Activated CD8-positive, alpha-beta T cell treated with anti-CD3 and anti-CD28 coated beads for 36 hours (primary cell): ENCODE measurements at regions of chr5 and their contacts with region 1.

Region 1: DNA sequence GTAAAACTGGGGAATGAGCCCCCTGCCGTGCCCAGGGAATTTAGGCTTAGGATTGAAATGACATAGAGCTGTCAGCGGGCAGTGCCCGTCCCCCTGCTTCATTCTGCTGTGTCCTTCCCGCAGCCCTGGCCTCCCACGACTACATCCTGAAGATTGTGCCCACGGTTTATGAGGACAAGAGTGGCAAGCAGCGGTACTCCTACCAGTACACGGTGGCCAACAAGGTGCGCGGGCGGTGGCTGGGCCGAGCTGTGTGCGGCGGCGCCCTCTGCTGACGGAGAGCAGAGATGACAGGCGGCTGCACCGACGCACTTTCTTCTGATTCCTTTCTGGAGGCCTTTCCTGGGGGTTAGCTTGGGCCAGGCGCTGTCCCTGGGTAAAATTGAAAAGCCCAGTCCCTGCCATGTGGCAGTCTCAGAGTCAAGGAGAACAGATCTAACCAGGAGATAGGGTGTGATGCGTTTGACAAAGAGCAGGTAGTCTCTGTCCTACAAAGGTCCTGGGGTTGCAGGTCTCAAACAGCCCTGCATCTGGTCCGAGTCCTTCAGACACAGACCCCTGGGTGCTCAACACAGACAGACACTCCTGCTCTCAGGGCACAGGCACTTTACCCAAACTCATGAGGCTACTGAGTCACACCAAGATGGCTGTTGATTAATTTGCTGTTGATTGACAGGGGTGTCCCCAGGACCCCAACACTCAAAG is 26.8 kb upstream of the RPL26L1 start:
- DNase-seq: peak; percentile 83
- ATAC-seq: peak; percentile 98
- H3K4me3 Mint-ChIP-seq: no peak overlapping the region
- H3K27ac Mint-ChIP-seq: no peak overlapping the region
- H3K4me1 Mint-ChIP-seq: peaks cover 2% of the 10 kb centered on the region
- H3K27me3 Mint-ChIP-seq: no peaks in the 10 kb centered on the region
- CTCF ChIP-seq: peak; percentile 96

Region 2: GRCh38 chr5:172583931-172584511 is 348.4 kb before region 1 on chr5:
- CTCF ChIA-PET with region 1: no interaction called
- POLR2A ChIA-PET with region 1: no interaction called
- intact Hi-C with region 1: no loop called
- DNase-seq: no peak
- ATAC-seq: no peak
- H3K4me3 Mint-ChIP-seq: no peak overlapping the region
- H3K27ac Mint-ChIP-seq: no peak overlapping the region
- H3K4me1 Mint-ChIP-seq: no peaks in the 10 kb centered on the region
- H3K27me3 Mint-ChIP-seq: no peaks in the 10 kb centered on the region
- CTCF ChIP-seq: no peak

Region 3: GRCh38 chr5:172707285-172708182 is 224.9 kb before region 1 on chr5:
- CTCF ChIA-PET with region 1: interaction called, 279 read pairs
- POLR2A ChIA-PET with region 1: no interaction called
- intact Hi-C with region 1: no loop called
- DNase-seq: peak; percentile 24
- ATAC-seq: peak; percentile 30
- H3K4me3 Mint-ChIP-seq: no peak overlapping the region
- H3K27ac Mint-ChIP-seq: no peak overlapping the region
- H3K4me1 Mint-ChIP-seq: no peaks in the 10 kb centered on the region
- H3K27me3 Mint-ChIP-seq: peaks cover 10% of the 10 kb centered on the region
- CTCF ChIP-seq: no peak

Region 4: DNA sequence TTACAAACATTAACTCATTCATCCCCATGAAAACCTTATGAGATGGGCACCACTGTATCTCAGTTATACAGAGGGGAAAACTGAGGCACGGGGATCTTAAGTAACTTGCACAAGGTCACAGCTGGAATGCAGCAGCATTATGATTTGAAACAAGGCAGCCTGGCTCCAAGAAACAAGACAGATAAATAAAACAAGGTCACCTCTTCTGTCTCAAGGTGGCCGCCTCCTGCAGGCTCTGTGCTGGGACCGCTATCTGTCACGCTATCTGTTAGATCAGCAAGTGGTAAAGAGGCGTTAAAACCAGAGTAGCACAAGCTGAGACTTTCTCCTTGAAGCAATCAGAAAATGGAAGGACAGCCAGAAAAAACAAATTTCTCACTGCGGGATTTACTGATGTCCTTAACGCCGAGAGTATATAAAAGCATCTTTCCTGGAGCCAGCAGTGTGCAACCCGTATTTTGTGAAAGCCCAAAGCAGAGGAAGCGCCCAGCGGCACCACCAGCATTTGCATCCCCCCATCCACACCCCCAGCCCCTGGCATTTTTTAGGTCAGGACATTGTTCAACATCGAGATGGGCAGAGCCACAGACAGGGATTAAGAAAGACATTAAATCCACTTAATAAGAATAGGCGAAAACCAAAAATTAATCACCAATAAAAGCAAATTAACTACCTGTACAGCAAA is 210.2 kb before region 1 on chr5:
- CTCF ChIA-PET with region 1: interaction called, 105 read pairs
- POLR2A ChIA-PET with region 1: interaction called, 8 read pairs
- intact Hi-C with region 1: loop called (anchors 1 kb)
- DNase-seq: peak; percentile 36
- ATAC-seq: peak; percentile 68
- H3K4me3 Mint-ChIP-seq: no peak overlapping the region
- H3K27ac Mint-ChIP-seq: no peak overlapping the region
- H3K4me1 Mint-ChIP-seq: peaks cover 12% of the 10 kb centered on the region
- H3K27me3 Mint-ChIP-seq: no peaks in the 10 kb centered on the region
- CTCF ChIP-seq: no peak

Region 5: DNA sequence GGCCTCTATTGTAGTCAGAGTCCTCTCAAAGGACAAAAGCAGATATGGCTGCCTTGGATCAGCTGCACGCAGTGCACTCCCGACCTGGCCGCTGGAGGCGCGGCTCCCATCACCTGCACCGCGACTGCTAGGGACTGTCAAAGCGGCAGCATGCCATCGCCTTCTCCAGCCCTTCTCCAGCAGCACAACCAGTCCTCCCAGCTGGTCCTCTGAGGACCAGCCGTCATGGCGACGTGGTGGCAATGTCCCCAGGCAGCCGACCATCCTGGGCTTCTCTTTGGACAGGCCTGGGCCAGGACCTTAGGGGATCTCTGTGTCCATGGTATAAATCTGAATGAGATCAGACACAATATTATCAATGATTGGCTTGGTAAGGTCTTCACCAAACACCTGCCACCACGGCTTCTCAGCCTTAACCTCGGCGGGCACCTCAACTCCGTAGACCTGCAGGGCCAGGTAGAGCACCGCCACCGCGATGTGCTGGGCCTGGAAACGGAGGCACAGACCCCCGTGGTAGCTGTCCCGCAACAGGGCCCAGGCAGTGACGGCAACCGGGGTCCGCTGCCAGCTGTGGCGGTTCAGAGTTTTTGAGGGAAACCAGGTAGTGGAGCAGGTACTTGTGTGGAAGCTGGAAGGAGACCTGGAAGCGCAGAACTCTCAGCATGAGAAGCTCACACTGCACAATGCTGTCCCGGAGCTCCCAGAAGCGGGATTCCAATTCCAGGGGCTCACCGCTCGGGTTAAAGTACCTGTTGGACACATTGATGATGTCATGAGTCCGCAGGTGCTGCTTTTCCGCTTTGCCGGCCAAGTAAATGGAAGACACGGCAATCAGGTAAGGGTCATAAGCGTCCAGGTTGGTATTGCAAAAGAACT is 170.0 kb before region 1 on chr5:
- CTCF ChIA-PET with region 1: interaction called, 11 read pairs
- POLR2A ChIA-PET with region 1: no interaction called
- intact Hi-C with region 1: no loop called
- DNase-seq: no peak
- ATAC-seq: no peak
- H3K4me3 Mint-ChIP-seq: no peak overlapping the region
- H3K27ac Mint-ChIP-seq: no peak overlapping the region
- H3K4me1 Mint-ChIP-seq: peaks cover 23% of the 10 kb centered on the region
- H3K27me3 Mint-ChIP-seq: no peaks in the 10 kb centered on the region
- CTCF ChIP-seq: no peak

Region 6: GRCh38 chr5:172777881-172778814 is 154.3 kb before region 1 on chr5:
- CTCF ChIA-PET with region 1: interaction called, 17 read pairs
- POLR2A ChIA-PET with region 1: no interaction called
- intact Hi-C with region 1: no loop called
- DNase-seq: peak; percentile 36
- ATAC-seq: peak; percentile 38
- H3K4me3 Mint-ChIP-seq: peak overlapping the region; percentile 51
- H3K27ac Mint-ChIP-seq: peak overlapping the region; percentile 89
- H3K4me1 Mint-ChIP-seq: peaks cover 51% of the 10 kb centered on the region
- H3K27me3 Mint-ChIP-seq: no peaks in the 10 kb centered on the region
- CTCF ChIP-seq: no peak

Region 7: DNA sequence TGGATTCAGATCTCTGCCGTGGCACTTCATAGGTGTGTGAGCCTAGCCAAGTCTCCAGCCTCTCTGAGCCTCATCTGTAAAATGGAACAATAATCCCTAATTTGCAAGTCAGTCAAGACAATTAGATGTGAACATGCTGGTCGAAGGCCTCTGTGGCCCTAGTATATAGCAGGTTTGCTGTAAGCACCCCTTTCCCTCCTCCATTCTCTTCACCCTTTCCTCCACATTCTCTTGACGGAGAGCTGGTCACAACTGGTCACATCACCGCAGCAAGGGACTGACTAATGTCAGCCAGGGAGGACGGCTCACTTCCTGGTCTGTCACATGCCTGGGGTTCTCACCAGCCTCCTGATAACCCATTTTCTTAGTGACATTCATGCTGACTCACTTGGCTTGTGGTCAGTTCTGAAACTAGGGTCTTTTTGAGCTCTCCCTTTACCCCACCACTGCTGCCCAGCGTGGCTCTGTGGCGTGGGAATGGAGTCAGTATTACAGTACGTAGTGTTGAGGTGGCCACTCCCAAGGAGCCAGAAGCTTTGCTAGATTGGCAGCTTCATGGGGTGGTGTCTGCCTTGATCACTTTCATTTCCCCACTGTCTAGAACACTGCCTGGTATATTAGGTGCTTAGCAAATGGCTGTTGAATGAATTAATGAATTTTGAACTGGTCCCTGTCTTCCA is 50.6 kb before region 1 on chr5:
- CTCF ChIA-PET with region 1: no interaction called
- POLR2A ChIA-PET with region 1: no interaction called
- intact Hi-C with region 1: no loop called
- DNase-seq: peak; percentile 46
- ATAC-seq: peak; percentile 88
- H3K4me3 Mint-ChIP-seq: no peak overlapping the region
- H3K27ac Mint-ChIP-seq: peak overlapping the region; percentile 13
- H3K4me1 Mint-ChIP-seq: peaks cover 11% of the 10 kb centered on the region
- H3K27me3 Mint-ChIP-seq: no peaks in the 10 kb centered on the region
- CTCF ChIP-seq: no peak